ENCODE measurements at regions of chr4 and their contacts with region 1.

Region 1: GRCh38 chr4:77465271-77465670 is 140.3 kb upstream of the CXCL13 start:
- DNase-seq: peak; percentile 66
- ATAC-seq: peak; percentile 68
- H3K4me3 Mint-ChIP-seq: no peak overlapping the region
- H3K27ac Mint-ChIP-seq: no peak overlapping the region
- H3K4me1 Mint-ChIP-seq: no peaks in the 10 kb centered on the region
- H3K27me3 Mint-ChIP-seq: peaks cover 16% of the 10 kb centered on the region

Region 2: GRCh38 chr4:77697860-77698590 is 232.8 kb after region 1 on chr4:
- CTCF ChIA-PET with region 1: no interaction called
- POLR2A ChIA-PET with region 1: no interaction called
- intact Hi-C with region 1: loop called in 1 of 2 experiments (anchors 2 kb)
- DNase-seq: peak; percentile 33
- ATAC-seq: peak; percentile 33
- H3K4me3 Mint-ChIP-seq: no peak overlapping the region
- H3K27ac Mint-ChIP-seq: no peak overlapping the region
- H3K4me1 Mint-ChIP-seq: peaks cover 4% of the 10 kb centered on the region
- H3K27me3 Mint-ChIP-seq: no peaks in the 10 kb centered on the region

Region 3: DNA sequence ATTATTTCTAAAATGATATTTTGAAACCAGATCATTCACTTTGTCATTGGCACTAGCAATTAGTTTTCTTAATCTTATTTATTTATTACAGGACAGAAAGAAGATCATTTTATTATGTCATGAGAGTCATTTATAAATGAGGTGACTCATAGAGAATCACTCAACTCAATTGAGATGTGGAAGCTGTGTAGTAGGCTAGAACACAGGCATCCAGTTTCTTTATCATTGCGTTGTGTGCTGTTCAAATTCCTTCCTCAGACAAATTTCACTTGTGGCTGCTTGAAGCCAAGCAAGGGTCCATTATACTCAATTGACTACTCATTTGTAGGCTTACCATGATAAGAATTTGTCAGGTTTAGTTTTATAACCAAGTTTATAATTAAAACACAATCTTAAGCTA is 484.9 kb after region 1 on chr4:
- CTCF ChIA-PET with region 1: no interaction called
- POLR2A ChIA-PET with region 1: no interaction called
- intact Hi-C with region 1: no loop called
- DNase-seq: no peak
- ATAC-seq: no peak
- H3K4me3 Mint-ChIP-seq: no peak overlapping the region
- H3K27ac Mint-ChIP-seq: no peak overlapping the region
- H3K4me1 Mint-ChIP-seq: peaks cover 10% of the 10 kb centered on the region
- H3K27me3 Mint-ChIP-seq: no peaks in the 10 kb centered on the region

Measured in activated CD4-positive, alpha-beta T cell treated with anti-CD3 and anti-CD28 coated beads for 36 hours (primary cell).